Activated CD4-positive, alpha-beta memory T cell treated with anti-CD3 and anti-CD28 coated beads for 36 hours (primary cell): ENCODE measurements at regions of chrX and their contacts with region 1.

Region 1: GRCh38 chrX:13254076-13254785 is 65.6 kb downstream of the ATXN3L start:
- DNase-seq: peak; percentile 28
- H3K4me3 Mint-ChIP-seq: no peak overlapping the region
- H3K27ac Mint-ChIP-seq: no peak overlapping the region
- H3K4me1 Mint-ChIP-seq: peaks cover 54% of the 10 kb centered on the region
- H3K27me3 Mint-ChIP-seq: no peaks in the 10 kb centered on the region

Region 2: GRCh38 chrX:13212191-13212651 is 42.0 kb before region 1 on chrX:
- CTCF ChIA-PET with region 1: no interaction called
- POLR2A ChIA-PET with region 1: no interaction called
- intact Hi-C with region 1: no loop called
- DNase-seq: no peak
- H3K4me3 Mint-ChIP-seq: no peak overlapping the region
- H3K27ac Mint-ChIP-seq: no peak overlapping the region
- H3K4me1 Mint-ChIP-seq: no peaks in the 10 kb centered on the region
- H3K27me3 Mint-ChIP-seq: no peaks in the 10 kb centered on the region

Region 3: DNA sequence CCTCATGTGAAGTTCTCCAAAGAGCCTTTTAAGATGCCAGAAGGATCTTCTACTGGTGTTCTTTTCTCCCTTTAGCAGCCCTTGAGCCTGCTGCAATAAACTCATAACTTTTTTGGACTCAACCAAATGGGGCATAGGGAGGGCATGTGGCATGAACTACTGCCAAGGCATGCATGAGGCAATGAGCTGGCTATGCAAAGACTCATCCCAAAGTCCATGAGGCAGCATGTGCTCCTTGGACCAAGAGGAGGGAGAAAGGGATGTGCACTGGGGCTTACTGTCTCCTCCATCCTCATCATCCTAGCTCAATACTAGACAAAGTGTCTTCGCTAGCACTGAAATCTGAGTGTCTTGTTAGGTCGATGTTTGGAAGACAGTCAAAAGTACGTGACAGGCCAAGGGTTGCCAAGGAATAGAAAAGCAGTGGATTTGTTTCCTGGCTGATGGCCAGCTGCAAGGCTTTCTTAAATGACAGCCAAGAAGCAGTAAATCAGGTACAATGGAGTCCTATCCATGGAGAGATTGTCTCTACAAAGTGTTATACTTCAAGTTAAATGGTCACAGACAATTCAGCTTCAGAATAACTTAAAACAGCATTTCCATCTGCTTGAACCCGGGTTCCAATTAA is 110.1 kb after region 1 on chrX:
- CTCF ChIA-PET with region 1: no interaction called
- POLR2A ChIA-PET with region 1: no interaction called
- intact Hi-C with region 1: no loop called
- DNase-seq: no peak
- H3K4me3 Mint-ChIP-seq: no peak overlapping the region
- H3K27ac Mint-ChIP-seq: no peak overlapping the region
- H3K4me1 Mint-ChIP-seq: peaks cover 3% of the 10 kb centered on the region
- H3K27me3 Mint-ChIP-seq: no peaks in the 10 kb centered on the region

Region 4: DNA sequence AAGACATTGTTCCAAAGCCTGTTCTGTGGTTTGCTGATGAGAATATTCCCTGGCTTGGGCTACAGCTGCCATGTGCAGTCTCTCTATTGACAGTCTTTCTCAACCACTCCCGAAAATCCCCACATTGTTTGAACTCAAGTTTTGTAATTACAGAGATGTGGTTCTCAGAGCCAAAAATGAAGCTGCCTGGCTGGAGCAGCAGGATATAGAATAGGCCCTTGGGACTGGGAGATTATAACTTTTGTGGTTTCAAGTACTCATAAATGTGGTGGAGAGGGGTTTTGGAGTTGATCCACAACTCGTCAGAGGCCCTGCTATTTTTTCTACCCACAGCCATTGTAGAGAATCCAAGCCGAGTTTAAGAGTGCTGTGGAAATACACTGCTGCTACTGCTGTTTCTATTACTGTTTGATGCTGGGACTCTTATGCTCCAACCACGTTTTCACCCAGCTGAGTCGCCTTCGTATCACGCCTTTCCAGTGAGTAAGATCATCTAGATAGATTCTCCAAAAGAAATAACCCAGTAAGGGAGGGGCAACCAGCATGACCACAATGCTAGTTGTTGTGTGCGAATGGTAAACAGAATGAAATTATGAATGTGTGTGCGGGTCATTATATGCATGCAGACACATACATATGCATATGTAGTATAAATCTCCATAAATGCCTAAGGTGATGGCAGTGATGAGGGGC is 122.8 kb after region 1 on chrX:
- CTCF ChIA-PET with region 1: no interaction called
- POLR2A ChIA-PET with region 1: no interaction called
- intact Hi-C with region 1: loop called (anchors 10 kb)
- DNase-seq: peak; percentile 31
- H3K4me3 Mint-ChIP-seq: no peak overlapping the region
- H3K27ac Mint-ChIP-seq: no peak overlapping the region
- H3K4me1 Mint-ChIP-seq: peaks cover 35% of the 10 kb centered on the region
- H3K27me3 Mint-ChIP-seq: no peaks in the 10 kb centered on the region

Region 5: GRCh38 chrX:13487731-13488523 is 233.7 kb after region 1 on chrX:
- CTCF ChIA-PET with region 1: no interaction called
- POLR2A ChIA-PET with region 1: no interaction called
- intact Hi-C with region 1: loop called (anchors 10 kb)
- DNase-seq: peak; percentile 39
- H3K4me3 Mint-ChIP-seq: no peak overlapping the region
- H3K27ac Mint-ChIP-seq: peak overlapping the region; percentile 56
- H3K4me1 Mint-ChIP-seq: peaks cover 11% of the 10 kb centered on the region
- H3K27me3 Mint-ChIP-seq: no peaks in the 10 kb centered on the region

Region 6: GRCh38 chrX:13598877-13599276 is 344.6 kb after region 1 on chrX:
- CTCF ChIA-PET with region 1: no interaction called
- POLR2A ChIA-PET with region 1: no interaction called
- intact Hi-C with region 1: no loop called
- DNase-seq: no peak
- H3K4me3 Mint-ChIP-seq: no peak overlapping the region
- H3K27ac Mint-ChIP-seq: no peak overlapping the region
- H3K4me1 Mint-ChIP-seq: no peaks in the 10 kb centered on the region
- H3K27me3 Mint-ChIP-seq: peaks cover 3% of the 10 kb centered on the region

Region 7: DNA sequence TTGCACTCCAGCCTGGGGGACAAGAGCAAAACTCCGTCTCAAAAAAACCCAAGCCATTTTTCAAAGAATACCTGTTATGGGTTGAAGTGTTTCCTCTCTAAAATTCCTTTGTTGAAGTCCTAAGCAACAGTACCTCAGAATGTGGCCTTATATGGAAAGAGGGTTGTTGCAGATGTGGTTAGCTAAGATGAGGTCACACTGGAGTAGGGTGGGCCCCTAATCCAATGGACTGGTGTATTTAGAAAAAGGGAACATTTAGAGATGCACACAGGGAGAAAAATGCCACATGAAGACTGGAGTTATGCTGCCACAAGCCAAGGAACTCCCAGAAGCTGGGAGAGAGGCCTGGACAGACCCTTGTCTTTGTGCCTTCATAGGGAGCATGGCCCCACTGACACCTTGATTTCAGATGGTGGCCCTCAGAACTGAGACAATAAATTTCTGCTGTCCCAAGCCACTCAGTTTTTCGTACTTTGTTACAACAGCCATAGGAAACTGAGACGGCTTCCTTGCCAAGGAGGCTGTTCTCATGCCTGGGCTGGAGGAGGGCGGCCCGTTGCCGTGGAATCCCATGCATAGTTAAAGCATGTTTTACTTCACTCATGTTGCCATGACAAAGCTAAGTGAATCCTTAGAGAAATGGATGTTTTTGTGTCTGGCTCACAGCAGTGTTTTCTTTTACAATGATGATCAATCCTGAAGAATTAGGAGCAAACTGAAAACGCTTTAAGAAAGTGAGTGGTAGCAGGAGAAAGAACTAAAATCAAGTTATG is 463.7 kb after region 1 on chrX:
- CTCF ChIA-PET with region 1: no interaction called
- POLR2A ChIA-PET with region 1: no interaction called
- intact Hi-C with region 1: no loop called
- DNase-seq: no peak
- H3K4me3 Mint-ChIP-seq: no peak overlapping the region
- H3K27ac Mint-ChIP-seq: peak overlapping the region; percentile 42
- H3K4me1 Mint-ChIP-seq: peaks cover 32% of the 10 kb centered on the region
- H3K27me3 Mint-ChIP-seq: no peaks in the 10 kb centered on the region